Right lobe of liver (tissue), 6 donors: ENCODE measurements at regions of chr16 and their contacts with region 1.

Region 1: GRCh38 chr16:55711959-55712876 is 56.4 kb downstream of the SLC6A2 start:
- DNase-seq: peak in 2 of 3 donors; percentile 67 to 78
- ATAC-seq: peak; percentile 92 to 98 (median 97)
- H3K4me3 ChIP-seq: no peak overlapping the region
- H3K27ac ChIP-seq: no peak overlapping the region
- H3K4me1 ChIP-seq: no peaks in the 10 kb centered on the region
- H3K27me3 ChIP-seq: no peaks in the 10 kb centered on the region
- CTCF ChIP-seq: peak; percentile 70 to 78 (median 76)
- POLR2A ChIP-seq: no peak

Region 2: GRCh38 chr16:55605754-55606336 is 106.4 kb before region 1 on chr16:
- intact Hi-C with region 1: no loop called
- DNase-seq: no peak
- ATAC-seq: no peak
- H3K4me3 ChIP-seq: no peak overlapping the region
- H3K27ac ChIP-seq: no peak overlapping the region
- H3K4me1 ChIP-seq: no peaks in the 10 kb centered on the region
- H3K27me3 ChIP-seq: no peaks in the 10 kb centered on the region
- CTCF ChIP-seq: no peak
- POLR2A ChIP-seq: no peak

Region 3: GRCh38 chr16:55842369-55843104 is 130.3 kb after region 1 on chr16:
- intact Hi-C with region 1: loop called (anchors 5 kb)
- DNase-seq: no peak
- ATAC-seq: peak; percentile 80 to 89 (median 86)
- H3K4me3 ChIP-seq: no peak overlapping the region
- H3K27ac ChIP-seq: no peak overlapping the region
- H3K4me1 ChIP-seq: peaks cover 0 to 17% (median 4%) of the 10 kb centered on the region in 4 donors
- H3K27me3 ChIP-seq: no peaks in the 10 kb centered on the region
- CTCF ChIP-seq: peak; percentile 67 to 85 (median 72)
- POLR2A ChIP-seq: no peak

Region 4: DNA sequence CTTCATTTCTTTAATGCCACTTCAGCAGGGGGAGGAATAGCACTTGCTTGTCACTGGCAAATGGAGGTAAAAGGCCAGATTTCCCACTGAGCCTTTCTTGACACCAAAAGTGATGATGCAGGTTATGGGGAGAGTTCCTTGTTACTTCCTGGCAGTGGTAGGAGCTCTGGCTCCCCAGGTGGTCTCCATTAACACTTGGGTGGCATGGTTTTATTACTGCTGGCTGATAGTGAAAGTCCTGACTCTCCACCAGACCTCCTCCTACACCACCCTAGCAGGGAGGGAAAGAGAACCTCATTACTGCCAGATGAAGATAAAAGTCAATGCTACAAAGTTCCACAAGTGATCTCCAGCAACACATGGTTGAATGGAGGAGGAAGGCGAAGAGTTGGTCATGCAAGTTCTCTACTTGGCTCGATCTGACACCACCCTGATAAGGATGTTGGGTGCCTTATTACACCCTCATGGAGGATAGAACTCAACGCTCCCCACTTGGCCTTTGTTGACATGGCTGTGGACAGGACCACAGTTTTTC is 326.4 kb after region 1 on chr16:
- intact Hi-C with region 1: no loop called
- DNase-seq: no peak
- ATAC-seq: no peak
- H3K4me3 ChIP-seq: no peak overlapping the region
- H3K27ac ChIP-seq: no peak overlapping the region
- H3K4me1 ChIP-seq: no peaks in the 10 kb centered on the region
- H3K27me3 ChIP-seq: no peaks in the 10 kb centered on the region
- CTCF ChIP-seq: no peak
- POLR2A ChIP-seq: no peak